ENCODE measurements at regions of chr19 and their contacts with region 1.

Region 1: GRCh38 chr19:55632463-55632834 is 8.1 kb upstream of the ZNF784 start:
- DNase-seq: peak; percentile 92
- ATAC-seq: peak; percentile 61
- H3K4me3 Mint-ChIP-seq: peak overlapping the region; percentile 20; the same call in 1 of the 2 replicates
- H3K27ac Mint-ChIP-seq: peak overlapping the region; percentile 80
- H3K4me1 Mint-ChIP-seq: peaks cover 29% of the 10 kb centered on the region
- H3K27me3 Mint-ChIP-seq: peaks cover 9% of the 10 kb centered on the region; the same call in 1 of the 2 replicates
- CTCF ChIP-seq: peak; percentile 87

Region 2: GRCh38 chr19:55580628-55581144 is 51.8 kb before region 1 on chr19 and contains the start of gene ZNF579:
- CTCF ChIA-PET with region 1: interaction called, 13 read pairs
- POLR2A ChIA-PET with region 1: no interaction called
- DNase-seq: peak; percentile 89
- ATAC-seq: peak; percentile 72
- H3K4me3 Mint-ChIP-seq: peak within 1 kb of the TSS; percentile 86
- H3K27ac Mint-ChIP-seq: peak within 1 kb of the TSS; percentile 90
- H3K4me1 Mint-ChIP-seq: peaks cover 10% of the 10 kb centered on the region
- H3K27me3 Mint-ChIP-seq: peaks cover 17% of the 10 kb centered on the region
- CTCF ChIP-seq: no peak
- total RNA-seq, gene ZNF579: 29.7 to 30.4 TPM (median 30.0 TPM) in 3 replicates

Region 3: DNA sequence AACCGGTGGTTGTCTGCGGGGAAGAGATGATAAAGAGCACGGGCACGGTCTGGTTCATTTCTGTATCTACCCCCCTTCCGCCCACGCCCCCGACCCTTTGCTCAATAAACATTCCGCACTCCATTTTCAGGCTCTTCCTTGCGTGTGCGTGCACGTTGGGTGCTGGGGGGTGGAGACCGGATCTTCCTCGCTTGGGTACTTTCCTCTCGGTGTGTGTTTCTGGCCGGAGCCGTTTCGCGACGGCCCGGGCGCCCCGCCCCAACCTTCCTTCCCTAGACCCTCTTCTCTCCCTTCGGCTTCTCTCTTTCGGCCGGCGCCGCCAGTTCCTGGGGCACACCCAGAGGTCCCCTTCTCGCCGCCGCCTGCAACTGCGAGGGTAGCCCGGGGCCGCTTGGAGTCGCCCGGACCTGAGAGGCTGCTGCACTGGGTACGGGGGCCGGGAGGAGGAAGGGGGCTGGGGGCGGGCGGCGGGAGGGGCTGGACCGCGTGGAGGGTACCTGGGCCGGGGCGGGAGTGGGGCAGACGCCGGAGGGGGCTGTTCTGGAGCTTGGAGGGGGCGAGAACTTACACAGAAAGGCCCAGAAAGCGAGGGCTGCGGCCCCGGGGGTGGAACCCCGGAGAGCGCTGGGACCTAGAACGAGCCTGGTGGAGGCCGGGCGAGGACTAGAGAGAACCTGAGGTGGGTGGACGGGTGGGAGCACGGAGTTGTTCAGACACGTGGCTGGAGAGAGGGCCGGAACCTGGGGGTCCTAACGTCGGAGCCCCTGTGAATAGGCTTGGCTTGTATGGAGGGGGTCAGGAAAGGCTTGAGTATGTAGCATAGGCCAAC is 11.1 kb after region 1 on chr19 and contains the start of gene ZNF581:
- CTCF ChIA-PET with region 1: interaction called, 15 read pairs
- POLR2A ChIA-PET with region 1: no interaction called
- DNase-seq: peak; percentile 72
- ATAC-seq: peak; percentile 9
- H3K4me3 Mint-ChIP-seq: peak within 1 kb of the TSS; percentile 89
- H3K27ac Mint-ChIP-seq: peak within 1 kb of the TSS; percentile 93
- H3K4me1 Mint-ChIP-seq: peaks cover 26% of the 10 kb centered on the region
- H3K27me3 Mint-ChIP-seq: peaks cover 9% of the 10 kb centered on the region
- CTCF ChIP-seq: no peak
- total RNA-seq, gene ZNF581: 94.6 to 100 TPM (median 99.5 TPM) in 3 replicates

Region 4: DNA sequence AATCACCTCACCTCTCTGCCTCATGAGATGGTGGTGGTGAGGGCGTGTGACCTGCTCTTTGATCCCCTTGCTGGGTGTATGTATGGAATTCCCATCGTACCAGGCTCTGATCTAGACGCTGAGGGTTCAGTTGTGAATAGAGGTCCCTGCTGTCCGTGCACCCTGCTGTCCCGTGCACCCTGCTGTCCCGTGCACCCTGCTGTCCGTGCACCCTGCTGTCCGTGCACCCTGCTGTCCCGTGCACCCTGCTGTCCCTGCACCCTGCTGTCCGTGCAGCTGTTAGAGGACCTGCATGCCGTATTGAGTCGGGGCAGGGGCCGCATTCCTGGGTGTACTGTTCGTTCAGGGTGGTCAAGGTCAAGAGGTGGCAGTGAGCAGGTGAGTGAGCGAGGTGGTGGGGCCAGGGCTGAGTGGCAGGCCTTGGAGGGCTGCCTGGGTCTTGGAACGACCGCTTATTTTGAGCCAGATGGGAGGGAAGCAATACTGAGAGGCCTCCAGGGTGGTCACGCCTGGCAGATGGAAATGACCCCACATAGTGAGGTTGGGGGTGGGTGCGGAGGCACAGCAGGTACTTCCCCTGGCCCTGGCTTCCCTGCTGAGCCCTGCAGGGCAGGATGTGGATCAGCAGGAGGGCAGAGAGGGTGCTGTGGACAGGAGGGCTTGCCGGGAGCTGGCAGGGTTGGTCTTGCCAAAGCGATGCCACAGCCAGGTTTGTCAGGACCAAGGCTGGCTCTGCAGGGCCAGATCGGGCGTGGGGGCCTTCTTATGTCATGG is 38.0 kb after region 1 on chr19:
- CTCF ChIA-PET with region 1: interaction called, 21 read pairs
- POLR2A ChIA-PET with region 1: interaction called, 3 read pairs
- DNase-seq: peak; percentile 31
- ATAC-seq: no peak
- H3K4me3 Mint-ChIP-seq: no peak overlapping the region
- H3K27ac Mint-ChIP-seq: peak overlapping the region; percentile 73
- H3K4me1 Mint-ChIP-seq: peaks cover 32% of the 10 kb centered on the region
- H3K27me3 Mint-ChIP-seq: no peaks in the 10 kb centered on the region
- CTCF ChIP-seq: no peak

Region 5: GRCh38 chr19:55753401-55753800 is 121.0 kb after region 1 on chr19:
- CTCF ChIA-PET with region 1: no interaction called
- POLR2A ChIA-PET with region 1: no interaction called
- DNase-seq: no peak
- ATAC-seq: no peak
- H3K4me3 Mint-ChIP-seq: no peak overlapping the region
- H3K27ac Mint-ChIP-seq: no peak overlapping the region
- H3K4me1 Mint-ChIP-seq: no peaks in the 10 kb centered on the region
- H3K27me3 Mint-ChIP-seq: peaks cover 18% of the 10 kb centered on the region
- CTCF ChIP-seq: no peak